ENCODE measurements at regions of chr13 and their contacts with region 1.

Region 1: DNA sequence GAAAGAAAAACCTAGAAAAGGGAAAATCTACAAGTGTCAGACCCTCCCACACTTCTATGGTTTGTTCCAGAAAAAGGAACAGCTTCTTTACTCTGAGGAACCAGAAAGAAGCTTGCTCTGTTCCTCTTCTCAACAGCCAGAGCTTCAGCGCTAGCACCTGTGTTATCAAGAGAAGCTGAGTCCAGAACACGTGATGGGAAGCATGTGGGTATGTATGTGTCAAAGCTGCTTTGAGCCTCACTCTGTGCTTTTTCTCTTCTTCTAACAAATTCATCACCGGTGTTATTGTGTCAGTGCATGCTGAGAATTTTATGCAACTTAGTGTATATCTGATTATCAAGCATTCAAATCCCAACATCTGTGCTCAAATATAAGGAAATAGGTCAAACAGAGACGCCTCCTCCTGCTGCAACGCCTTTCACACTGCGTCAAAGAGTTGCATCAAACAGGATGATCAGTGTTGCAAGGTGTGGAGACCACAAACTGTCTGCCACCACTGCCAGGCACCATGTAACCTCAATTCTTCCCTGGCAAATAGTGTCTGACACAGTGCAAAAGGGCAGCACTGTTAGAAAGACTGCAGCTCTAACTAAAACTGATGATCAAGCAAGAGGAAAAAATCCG is 83.9 kb downstream of the LRRC63 start:
- DNase-seq: peak in 1 of 2 donors; percentile 59
- ATAC-seq: peak; percentile 72
- H3K4me3 ChIP-seq: no peak overlapping the region
- H3K27ac ChIP-seq: no peak overlapping the region
- H3K4me1 ChIP-seq: no peaks in the 10 kb centered on the region
- H3K27me3 ChIP-seq: no peaks in the 10 kb centered on the region

Region 2: DNA sequence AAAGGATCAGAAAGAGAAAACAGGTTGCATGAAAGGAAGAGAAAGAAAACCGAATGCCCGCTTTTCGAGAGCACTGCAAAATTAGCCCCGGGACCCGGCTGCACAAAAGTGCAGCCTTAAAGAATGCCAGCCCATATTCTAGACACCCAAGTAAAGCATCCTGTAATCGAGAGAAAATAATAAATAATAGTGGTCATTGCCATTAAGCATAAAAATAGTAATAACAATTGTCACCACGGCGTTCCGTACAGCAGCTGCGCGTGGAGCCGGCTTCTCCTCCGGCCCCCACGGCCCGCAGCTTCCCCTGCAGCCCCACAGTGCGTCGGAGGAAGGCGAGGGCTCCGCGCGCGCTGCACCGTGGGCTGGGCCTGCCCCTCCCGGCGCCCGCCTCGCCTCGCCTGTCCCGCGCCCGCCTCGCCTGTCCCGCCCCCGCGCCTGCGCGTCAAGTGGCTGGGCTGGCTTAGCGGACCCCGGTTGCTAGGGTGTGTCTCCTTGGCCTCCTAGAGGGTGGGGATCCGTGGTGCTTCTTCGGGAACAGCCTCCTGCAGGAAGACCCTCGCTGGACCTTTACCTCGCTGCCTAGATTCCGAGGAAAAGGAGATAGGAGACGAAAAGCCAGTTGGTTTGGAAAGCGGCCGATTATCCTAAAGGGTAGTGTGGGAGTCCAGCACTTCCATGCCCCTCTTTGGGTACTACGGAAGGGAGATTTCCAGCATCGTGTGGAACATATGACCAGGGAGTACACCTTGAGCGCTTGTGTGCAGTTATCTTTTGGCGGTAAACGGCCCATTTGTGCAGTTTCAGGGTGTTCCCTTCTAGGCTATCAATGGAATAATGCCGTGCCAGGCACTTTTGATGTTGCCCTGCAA is 83.9 kb before region 1 on chr13 and contains the start of gene LRRC63:
- intact Hi-C with region 1: loop called in 1 of 2 experiments (anchors 5 kb)
- DNase-seq: peak; percentile 90 to 93
- ATAC-seq: peak; percentile 91
- H3K4me3 ChIP-seq: peak within 1 kb of the TSS; percentile 46 to 62
- H3K27ac ChIP-seq: no peak within 1 kb of the TSS
- H3K4me1 ChIP-seq: peaks cover 0 to 3% of the 10 kb centered on the region in 2 donors
- H3K27me3 ChIP-seq: no peaks in the 10 kb centered on the region
- total RNA-seq, gene LRRC63: 0.99 TPM in 1 of 2 donors, not detected in the other

Region 3: DNA sequence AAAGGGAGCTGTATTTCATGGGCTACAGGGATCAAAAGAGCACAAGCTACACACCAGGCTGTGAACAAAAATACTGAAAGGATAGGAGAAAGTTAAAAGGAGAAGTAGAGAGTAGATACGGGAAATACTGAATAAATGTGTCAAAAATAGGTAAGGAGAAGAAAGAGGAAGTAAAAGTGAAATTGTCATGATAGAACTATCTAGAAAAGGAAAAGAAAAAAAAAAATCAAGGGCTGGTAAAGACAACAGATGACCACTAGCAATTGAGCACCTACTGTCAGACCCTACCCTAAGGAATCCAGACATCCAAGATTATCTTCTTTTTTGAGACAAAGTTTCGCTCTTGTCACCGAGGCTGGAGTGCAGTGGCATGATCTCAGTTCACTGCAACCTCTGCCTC is 86.6 kb after region 1 on chr13:
- intact Hi-C with region 1: no loop called
- DNase-seq: no peak
- ATAC-seq: no peak
- H3K4me3 ChIP-seq: no peak overlapping the region
- H3K27ac ChIP-seq: no peak overlapping the region
- H3K4me1 ChIP-seq: no peaks in the 10 kb centered on the region
- H3K27me3 ChIP-seq: no peaks in the 10 kb centered on the region

Region 4: DNA sequence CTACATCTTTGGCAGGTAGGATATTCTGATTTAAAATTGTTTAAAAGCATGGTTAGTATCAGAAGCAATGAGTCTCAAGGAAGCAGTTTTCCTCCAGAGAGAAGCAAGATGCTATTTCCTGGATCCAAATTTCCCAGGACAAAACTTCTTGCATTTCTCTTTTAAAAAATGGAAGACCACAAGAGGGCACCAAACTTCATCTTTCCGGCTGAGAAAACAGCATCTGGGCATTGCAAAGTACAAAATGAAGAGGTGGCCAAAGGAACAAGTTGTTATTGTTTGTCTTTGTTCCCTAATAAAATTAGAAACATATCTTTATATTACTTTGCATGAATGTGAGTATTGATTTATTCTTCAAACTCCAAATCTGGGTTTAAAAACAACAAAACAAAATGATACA is 197.3 kb after region 1 on chr13:
- intact Hi-C with region 1: no loop called
- DNase-seq: no peak
- ATAC-seq: no peak
- H3K4me3 ChIP-seq: no peak overlapping the region
- H3K27ac ChIP-seq: no peak overlapping the region
- H3K4me1 ChIP-seq: peaks cover 4 to 8% of the 10 kb centered on the region in 2 donors
- H3K27me3 ChIP-seq: no peaks in the 10 kb centered on the region